Activated naive CD4-positive, alpha-beta T cell treated with anti-CD3 and anti-CD28 coated beads for 36 hours (primary cell): ENCODE measurements at regions of chr12 and their contacts with region 1.

Region 1: DNA sequence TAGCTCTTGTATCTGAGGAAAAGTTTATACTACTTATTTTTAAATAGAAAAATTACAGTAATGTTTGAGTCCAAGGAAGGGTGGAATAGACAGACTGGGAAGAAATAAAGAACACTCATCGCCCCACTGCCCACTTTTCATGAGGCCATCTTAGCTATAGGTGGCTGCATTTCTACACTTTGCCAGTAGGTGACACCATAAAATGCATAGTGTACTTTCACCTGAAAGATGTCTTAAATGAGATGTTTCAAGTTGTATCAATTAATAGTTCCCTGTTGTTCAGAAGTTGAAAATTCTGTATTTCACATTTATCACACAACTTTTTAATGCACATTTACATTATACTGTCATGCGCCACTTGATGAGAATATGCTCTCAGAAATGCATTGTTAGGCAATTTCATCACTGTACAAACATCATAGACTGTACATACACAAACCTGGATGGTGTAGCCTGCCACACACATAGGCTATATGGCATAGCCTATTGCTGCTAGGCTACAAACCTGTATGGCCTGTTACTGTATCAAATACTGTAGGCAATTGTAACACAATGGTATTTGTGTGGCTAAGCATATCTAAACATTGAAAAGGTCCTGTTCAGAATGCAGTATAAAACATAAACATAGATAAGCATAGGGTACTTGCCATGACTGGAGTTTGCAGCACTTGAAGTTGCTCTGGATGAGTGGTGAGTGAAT is 27.6 kb downstream of the PMCH start:
- DNase-seq: peak; percentile 30
- H3K4me3 Mint-ChIP-seq: no peak overlapping the region
- H3K27ac Mint-ChIP-seq: no peak overlapping the region
- H3K4me1 Mint-ChIP-seq: peaks cover 11% of the 10 kb centered on the region
- H3K27me3 Mint-ChIP-seq: no peaks in the 10 kb centered on the region

Region 2: DNA sequence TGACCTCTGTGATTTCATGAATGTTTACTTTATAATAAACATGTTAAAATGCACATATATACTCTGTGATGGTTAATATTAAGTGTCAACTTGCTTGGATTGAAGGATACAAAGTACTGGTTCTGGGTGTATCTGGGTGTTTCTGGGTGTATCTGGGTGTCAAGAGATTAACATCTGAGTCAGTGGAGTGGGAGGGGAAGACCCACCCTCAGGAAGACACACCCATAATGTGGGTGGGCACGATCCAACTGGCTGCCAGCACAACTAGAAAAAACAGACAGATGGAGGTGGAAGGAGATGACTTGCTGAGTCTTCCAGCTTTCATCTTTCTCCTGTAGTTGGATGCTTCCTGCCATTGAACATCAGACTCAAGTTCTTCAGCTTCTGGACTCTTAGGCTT is 62.1 kb before region 1 on chr12:
- CTCF ChIA-PET with region 1: no interaction called
- intact Hi-C with region 1: no loop called
- DNase-seq: no peak
- H3K4me3 Mint-ChIP-seq: no peak overlapping the region
- H3K27ac Mint-ChIP-seq: no peak overlapping the region
- H3K4me1 Mint-ChIP-seq: peaks cover 6% of the 10 kb centered on the region
- H3K27me3 Mint-ChIP-seq: no peaks in the 10 kb centered on the region

Region 3: GRCh38 chr12:102197789-102198188 is 27.7 kb after region 1 on chr12 and contains the start of gene PMCH:
- CTCF ChIA-PET with region 1: no interaction called
- intact Hi-C with region 1: loop called (anchors 2 kb)
- DNase-seq: no peak
- H3K4me3 Mint-ChIP-seq: no peak within 1 kb of the TSS
- H3K27ac Mint-ChIP-seq: no peak within 1 kb of the TSS
- H3K4me1 Mint-ChIP-seq: peaks cover 8% of the 10 kb centered on the region
- H3K27me3 Mint-ChIP-seq: no peaks in the 10 kb centered on the region
- total RNA-seq, gene PMCH: not detected

Region 4: DNA sequence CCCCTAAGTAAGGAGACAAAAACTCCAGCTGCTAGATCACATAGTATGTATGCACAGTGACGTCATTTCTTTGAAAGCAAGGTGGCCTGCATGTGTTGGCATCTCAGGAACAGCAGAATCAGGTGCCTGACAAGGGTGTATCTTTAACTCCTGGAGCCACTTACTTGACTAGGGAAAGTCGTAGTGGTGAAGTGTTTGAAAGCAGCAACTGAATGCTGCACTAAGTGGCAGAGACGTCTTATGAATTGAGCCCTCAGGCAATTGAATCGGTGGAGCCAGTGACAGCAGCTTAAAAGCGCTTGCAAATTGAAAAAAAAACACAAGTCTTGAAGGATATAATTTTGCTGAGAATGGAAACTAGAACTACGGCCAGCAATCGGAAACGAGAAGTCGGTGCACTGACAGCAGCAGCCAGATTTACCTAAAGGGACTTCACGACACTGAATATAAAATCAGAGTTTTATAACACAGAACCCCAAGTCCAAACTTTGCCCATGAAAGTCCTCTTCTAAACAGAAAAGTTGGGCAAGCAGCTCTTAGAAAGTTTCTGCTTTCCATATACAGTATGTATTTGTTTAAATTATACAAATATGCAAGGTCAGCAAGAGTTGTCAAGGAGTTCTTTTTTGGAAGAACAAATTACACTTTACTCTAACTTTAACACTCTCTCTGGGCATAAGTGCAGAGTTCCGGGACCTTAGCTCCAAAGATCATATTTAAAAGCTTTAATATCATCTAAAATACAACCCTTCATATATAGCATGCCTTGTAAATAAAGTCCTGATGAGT is 309.2 kb after region 1 on chr12:
- CTCF ChIA-PET with region 1: interaction called, 7 read pairs
- intact Hi-C with region 1: loop called (anchors 1 kb)
- DNase-seq: peak; percentile 7
- H3K4me3 Mint-ChIP-seq: no peak overlapping the region
- H3K27ac Mint-ChIP-seq: no peak overlapping the region
- H3K4me1 Mint-ChIP-seq: peaks cover 24% of the 10 kb centered on the region
- H3K27me3 Mint-ChIP-seq: peaks cover 11% of the 10 kb centered on the region